ENCODE measurements at regions of chr1 and their contacts with region 1.

Region 1: GRCh38 chr1:229227298-229227919 is 43.5 kb upstream of the RAB4A start:
- DNase-seq: no peak
- H3K4me3 ChIP-seq: no peak overlapping the region
- CTCF ChIP-seq: peak; percentile 80

Region 2: DNA sequence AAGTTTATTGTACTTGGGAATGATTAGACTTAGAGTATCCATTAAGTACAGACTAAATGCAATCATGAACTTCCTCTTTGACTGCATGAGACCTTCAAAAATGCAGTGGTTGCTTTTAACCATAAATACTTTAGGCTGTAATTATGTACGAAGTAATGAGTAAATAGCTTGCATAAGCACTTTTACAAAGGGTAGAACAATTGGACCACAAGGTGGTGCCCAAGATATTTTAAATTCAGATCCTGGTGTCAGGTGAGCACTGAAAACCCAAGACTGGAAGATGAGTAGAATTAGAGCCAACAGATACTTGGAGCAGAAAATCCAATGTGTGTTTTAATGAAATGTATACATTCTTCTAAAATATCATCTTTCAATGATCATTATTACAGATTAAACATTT is 535.5 kb before region 1 on chr1:
- CTCF ChIA-PET with region 1: interaction called, 17 read pairs
- POLR2A ChIA-PET with region 1: no interaction called
- DNase-seq: no peak
- H3K4me3 ChIP-seq: no peak overlapping the region
- CTCF ChIP-seq: no peak

Region 3: DNA sequence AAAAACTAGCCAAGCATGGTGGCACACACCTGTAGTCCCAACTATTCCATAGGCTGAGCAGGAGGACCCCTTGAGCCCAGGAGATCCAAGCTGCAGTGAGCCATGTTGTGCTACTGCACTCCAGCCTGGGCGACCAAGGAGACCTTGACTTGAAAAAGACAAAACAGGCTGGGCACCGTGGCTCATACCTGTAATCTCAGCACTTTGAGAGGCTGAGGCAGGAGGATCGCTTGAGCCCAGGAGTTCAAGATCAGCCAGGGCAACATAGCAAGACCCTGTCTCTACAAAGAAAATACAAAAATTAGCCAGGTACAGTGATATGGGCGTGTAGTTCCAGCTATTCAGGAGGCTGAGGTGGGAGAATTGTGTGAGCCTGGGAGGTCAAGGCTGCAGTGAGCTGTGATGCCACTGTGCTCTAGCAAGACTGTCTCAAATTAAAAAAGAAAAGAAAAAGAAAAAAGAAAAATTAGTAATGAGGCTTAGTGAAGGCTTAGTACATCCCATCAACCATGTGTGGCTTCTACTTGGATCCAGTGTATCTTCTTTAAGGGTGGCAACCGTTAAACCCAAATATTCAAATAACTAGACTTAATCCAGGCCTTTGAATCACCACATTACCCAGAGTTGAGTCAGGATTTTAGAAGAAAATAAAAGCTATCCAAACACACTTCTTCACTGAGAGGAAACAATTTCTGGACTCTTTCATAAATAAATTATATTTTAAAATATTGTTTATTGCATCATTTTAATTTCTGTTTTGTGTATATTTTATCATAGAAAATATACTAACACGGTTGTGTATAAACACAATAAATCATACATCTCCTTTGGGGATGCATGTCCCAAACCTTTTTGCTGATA is 30.8 kb before region 1 on chr1:
- CTCF ChIA-PET with region 1: interaction called, 14 read pairs
- POLR2A ChIA-PET with region 1: no interaction called
- DNase-seq: peak; percentile 24
- H3K4me3 ChIP-seq: no peak overlapping the region
- CTCF ChIP-seq: no peak

Region 4: DNA sequence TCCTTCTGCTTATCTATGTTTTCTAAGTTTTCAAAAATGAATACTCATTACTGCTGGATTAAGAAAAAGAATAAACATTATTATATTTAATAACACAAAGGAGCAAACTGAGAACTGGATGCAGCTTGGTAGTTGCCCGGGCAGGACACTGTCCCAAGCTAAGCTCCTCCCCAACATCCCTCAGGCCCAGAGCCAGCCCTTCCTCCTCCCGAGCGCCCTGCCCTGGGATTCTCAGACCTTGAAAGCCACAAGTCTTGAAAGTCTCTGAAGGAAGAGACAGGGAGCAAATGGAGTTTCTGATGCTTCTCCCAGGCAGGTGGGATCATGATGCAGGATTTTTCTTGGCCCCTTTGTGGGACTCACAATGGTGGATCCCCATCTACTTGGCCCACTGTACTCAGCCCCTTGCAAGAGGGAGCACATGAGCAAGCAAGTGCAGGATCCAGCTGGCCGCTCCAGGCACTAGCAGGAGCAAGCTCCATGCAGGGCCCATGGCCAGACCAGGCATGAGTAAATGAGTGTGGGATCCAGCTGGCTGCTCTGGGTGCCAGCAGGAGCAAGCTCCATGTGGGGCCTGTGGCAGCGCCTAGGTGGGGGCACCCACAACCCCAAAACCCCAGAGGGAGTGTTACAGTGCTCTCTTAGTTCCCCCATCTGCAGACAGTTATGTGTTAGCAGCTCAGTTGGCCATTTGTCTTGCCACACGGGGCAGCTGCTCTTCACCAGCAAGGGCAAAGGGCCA is 11.4 kb after region 1 on chr1:
- CTCF ChIA-PET with region 1: interaction called, 27 read pairs
- POLR2A ChIA-PET with region 1: no interaction called
- DNase-seq: no peak
- H3K4me3 ChIP-seq: no peak overlapping the region
- CTCF ChIP-seq: no peak